ENCODE measurements at regions of chr3 and their contacts with region 1.

Region 1: GRCh38 chr3:115147329-115148141 is 447 bp upstream of the ZBTB20 start:
- DNase-seq: peak; percentile 98
- H3K4me3 ChIP-seq: peak overlapping the region; percentile 86
- H3K27ac ChIP-seq: peak overlapping the region; percentile 98
- H3K4me1 ChIP-seq: peaks cover 37% of the 10 kb centered on the region
- H3K27me3 ChIP-seq: no peaks in the 10 kb centered on the region
- CTCF ChIP-seq: peak; percentile 14

Region 2: DNA sequence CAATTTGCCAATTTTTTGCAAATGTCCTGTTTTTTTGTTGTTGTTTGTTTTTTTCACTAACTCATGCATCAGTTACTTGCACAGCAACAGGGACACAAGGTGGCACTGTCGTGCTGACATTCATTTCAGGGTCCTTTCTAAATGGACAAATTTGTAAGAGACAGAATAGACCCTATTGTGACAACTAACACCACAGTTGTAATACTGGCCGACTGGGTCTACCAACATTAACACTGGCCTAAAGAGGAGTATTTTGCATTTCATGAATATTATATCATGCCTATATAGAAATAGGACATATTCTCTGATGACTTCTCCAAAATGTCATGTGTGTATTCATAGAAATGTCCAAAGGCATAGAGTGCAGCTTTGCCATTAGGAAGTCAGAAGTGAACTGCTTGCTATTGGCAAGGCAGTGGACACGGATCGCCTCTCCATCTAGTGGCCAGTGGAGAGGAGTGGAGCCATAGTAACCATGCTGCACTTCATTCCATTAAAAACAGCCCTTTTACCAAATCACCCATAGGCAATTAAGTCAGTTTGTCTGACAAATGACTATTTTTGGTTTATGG is 55.2 kb before region 1 on chr3:
- intact Hi-C with region 1: loop called (anchors 10 kb)
- DNase-seq: peak; percentile 62
- H3K4me3 ChIP-seq: peak overlapping the region; percentile 6
- H3K27ac ChIP-seq: peak overlapping the region; percentile 60
- H3K4me1 ChIP-seq: peaks cover 76% of the 10 kb centered on the region
- H3K27me3 ChIP-seq: no peaks in the 10 kb centered on the region
- CTCF ChIP-seq: peak; percentile 79

Measured in left ventricle myocardium inferior (tissue), 1 donor.